IMR-90 (cell line): ENCODE measurements at regions of chr1 and their contacts with region 1.

Region 1: DNA sequence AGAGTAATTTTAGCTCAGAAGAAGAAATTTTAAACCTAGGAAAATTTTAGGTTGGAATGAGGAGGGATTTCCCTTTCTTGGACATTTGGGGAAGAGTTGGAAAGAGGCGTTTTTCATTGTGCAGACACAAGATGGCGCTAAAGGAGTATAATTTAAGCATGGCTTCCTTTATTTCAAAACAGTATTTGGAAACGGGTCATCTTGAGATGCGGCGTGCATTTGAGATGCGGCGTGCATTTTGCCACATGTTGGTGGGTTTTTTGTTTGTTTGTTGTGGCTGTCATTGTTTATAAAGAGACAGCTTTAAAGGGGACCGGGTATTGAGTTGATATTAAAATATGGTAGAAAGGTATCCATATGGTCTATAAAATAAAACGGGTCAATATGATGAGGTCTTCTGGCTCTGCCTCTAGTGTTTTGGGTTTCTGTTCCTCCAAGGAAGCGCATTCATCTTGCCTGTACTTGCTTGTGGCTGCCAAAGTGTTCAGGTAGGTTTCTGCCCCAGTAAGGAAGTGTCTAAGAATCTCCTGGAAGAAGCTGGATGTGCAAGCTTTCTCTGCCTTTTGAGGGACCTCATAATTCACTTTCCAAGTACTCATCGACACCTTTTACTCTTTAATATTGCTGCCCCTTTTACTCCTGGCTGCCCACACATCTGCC is 210.3 kb downstream of the SLC35F3 start:
- DNase-seq: peak; percentile 59
- ATAC-seq: peak; percentile 87
- H3K4me3 ChIP-seq: peak overlapping the region; percentile 25; the same call in 1 of the 2 replicates
- H3K27ac ChIP-seq: no peak overlapping the region
- H3K4me1 ChIP-seq: no peaks in the 10 kb centered on the region
- H3K27me3 ChIP-seq: no peaks in the 10 kb centered on the region
- CTCF ChIP-seq: peak; percentile 76
- POLR2A ChIP-seq: no peak
- RAD21 ChIP-seq: peak; percentile 69

Region 2: DNA sequence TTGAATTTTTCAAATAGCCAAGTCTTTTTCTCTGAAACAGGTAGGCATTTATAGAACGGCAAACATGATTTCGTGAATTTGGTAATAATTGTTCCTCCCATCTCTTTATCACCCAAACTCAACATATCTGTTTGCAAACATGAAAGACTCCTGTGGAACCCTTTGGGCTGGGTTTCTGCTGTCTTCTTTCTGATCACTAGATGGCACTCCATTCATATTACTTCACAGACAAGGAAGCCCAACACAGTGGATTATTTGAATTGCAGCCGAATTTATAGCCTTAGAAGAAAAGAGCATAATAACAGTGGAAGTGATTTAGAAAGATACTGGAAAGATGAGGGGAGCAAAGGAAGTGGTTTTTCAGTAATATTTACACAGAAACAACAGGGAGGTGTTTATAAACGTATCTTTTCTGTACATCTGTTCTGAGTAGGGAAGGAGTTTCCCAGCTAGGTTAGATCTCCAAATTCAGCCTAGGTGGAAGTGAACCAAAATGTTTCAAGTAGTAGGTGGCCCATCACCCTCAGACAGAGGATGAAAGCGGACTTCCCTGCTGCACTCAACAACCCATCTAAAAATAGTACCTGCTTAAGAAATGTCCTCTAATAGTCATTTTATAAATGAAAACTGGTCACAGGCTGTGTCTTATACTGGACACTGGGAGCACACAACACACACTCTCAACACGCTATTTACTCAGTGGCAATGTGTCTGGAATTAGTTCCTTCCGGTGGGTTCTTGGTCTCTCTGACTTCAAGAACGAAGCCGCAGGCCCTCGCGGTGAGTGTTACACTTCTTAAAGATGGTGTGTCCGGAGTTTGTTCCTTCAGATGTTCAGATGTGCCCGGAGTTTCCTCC is 719.7 kb before region 1 on chr1:
- CTCF ChIA-PET with region 1: no interaction called
- POLR2A ChIA-PET with region 1: interaction called, 3 read pairs
- dilution Hi-C with region 1: no loop called
- in situ Hi-C with region 1: no loop called
- intact Hi-C with region 1: loop called (anchors 2 kb)
- DNase-seq: peak; percentile 50
- ATAC-seq: peak; percentile 97
- H3K4me3 ChIP-seq: no peak overlapping the region
- H3K27ac ChIP-seq: no peak overlapping the region
- H3K4me1 ChIP-seq: no peaks in the 10 kb centered on the region
- H3K27me3 ChIP-seq: no peaks in the 10 kb centered on the region; the same call in 1 of the 2 replicates
- CTCF ChIP-seq: peak; percentile 73
- POLR2A ChIP-seq: no peak
- RAD21 ChIP-seq: peak; percentile 66

Region 3: DNA sequence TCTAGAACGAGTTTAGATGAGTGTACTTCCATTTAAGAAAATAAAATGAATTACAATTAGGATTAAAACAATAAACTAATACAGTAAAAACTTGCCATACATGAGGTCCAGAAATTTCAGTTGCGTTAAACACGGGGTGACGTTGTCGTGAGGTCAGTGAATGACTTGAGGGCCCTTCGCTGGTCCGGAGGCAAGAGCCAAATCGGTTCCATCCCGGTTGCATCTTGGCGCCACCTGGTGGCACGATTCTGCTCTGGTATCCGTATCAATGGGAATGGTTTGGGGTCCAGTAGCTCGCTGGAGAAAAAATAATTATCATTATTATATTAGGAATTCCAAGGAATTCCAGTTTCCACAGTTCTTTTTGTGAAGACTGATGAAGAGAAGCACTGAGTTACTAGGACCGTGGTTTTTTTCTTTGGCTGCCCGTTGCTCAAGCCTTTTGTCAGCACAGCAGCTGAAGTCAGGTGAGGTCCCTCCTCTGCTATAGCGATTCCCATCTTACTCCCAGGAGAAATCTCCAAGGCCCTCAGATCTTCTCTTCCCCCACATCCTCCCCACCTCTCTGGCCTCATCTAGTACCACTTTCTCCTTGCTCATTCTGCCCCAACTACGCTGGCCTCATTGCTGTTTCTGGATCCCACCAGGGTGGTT is 48.9 kb before region 1 on chr1:
- CTCF ChIA-PET with region 1: no interaction called
- POLR2A ChIA-PET with region 1: no interaction called
- dilution Hi-C with region 1: no loop called
- in situ Hi-C with region 1: no loop called
- intact Hi-C with region 1: no loop called
- DNase-seq: peak; percentile 47
- ATAC-seq: peak; percentile 82
- H3K4me3 ChIP-seq: no peak overlapping the region
- H3K27ac ChIP-seq: no peak overlapping the region
- H3K4me1 ChIP-seq: no peaks in the 10 kb centered on the region
- H3K27me3 ChIP-seq: no peaks in the 10 kb centered on the region
- CTCF ChIP-seq: peak; percentile 67
- POLR2A ChIP-seq: no peak
- RAD21 ChIP-seq: peak; percentile 58

Region 4: GRCh38 chr1:234309598-234310459 is 195.1 kb after region 1 on chr1:
- CTCF ChIA-PET with region 1: interaction called, 6 read pairs
- POLR2A ChIA-PET with region 1: no interaction called
- dilution Hi-C with region 1: no loop called
- in situ Hi-C with region 1: no loop called
- intact Hi-C with region 1: loop called (anchors 1 kb)
- DNase-seq: peak; percentile 46
- ATAC-seq: peak; percentile 89
- H3K4me3 ChIP-seq: peak overlapping the region; percentile 17; the same call in 1 of the 2 replicates
- H3K27ac ChIP-seq: no peak overlapping the region
- H3K4me1 ChIP-seq: peaks cover 3% of the 10 kb centered on the region; the same call in 1 of the 2 replicates
- H3K27me3 ChIP-seq: peaks cover 2% of the 10 kb centered on the region; the same call in 1 of the 2 replicates
- CTCF ChIP-seq: peak; percentile 71
- POLR2A ChIP-seq: no peak
- RAD21 ChIP-seq: peak; percentile 55

Region 5: DNA sequence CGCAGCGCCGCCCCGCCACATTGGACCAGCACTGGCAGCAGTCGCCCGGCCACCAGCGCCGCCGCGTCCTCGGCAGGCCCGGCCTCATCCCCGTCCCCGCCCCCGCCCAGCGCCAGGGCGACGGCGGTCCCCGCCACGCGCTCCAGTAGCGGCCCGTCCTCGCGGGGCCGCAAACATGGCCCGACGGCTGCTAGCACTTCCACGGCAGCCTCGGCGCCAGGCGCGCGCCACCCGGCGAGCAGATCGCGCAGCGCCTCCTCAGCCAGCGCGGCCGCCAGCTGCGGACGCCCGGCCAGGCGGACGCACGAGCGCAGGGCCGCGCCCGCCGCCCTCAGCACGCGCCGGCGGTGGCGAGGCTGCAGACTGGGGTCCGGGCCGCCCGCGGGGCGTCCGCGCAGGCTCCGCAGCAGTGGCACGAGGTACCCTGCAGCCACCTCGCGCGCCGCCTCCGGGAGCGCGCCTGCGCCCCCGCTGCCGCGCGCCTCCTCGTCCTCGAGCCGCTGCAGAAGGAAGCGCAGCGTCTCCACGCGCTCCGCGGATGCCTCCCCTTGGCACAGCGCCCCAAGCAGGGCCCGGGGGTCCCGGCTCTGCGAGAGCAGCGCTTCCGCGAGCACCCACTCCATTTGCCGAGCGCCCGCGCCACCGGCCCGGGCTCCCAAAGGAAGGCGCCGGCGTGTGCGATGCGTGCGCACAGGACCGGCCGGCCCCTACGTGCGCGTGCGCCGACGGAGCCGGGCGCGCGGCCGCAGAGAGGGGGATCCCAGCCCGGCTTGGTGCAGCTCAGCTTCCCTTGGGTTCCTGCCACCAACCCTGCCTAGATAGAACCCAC is 363.9 kb after region 1 on chr1 and contains the start of gene TARBP1:
- CTCF ChIA-PET with region 1: no interaction called
- POLR2A ChIA-PET with region 1: no interaction called
- dilution Hi-C with region 1: no loop called
- in situ Hi-C with region 1: no loop called
- intact Hi-C with region 1: loop called (anchors 2 kb)
- DNase-seq: peak; percentile 78
- ATAC-seq: peak; percentile 86
- H3K4me3 ChIP-seq: peak within 1 kb of the TSS; percentile 83
- H3K27ac ChIP-seq: peak within 1 kb of the TSS; percentile 62; the same call in 1 of the 2 replicates
- H3K4me1 ChIP-seq: peaks cover 8% of the 10 kb centered on the region
- H3K27me3 ChIP-seq: 0 out of 2 replicates have a peak, but pooled peaks cover 2% of the 10 kb centered on the region
- CTCF ChIP-seq: peak; percentile 36; the same call in 1 of the 2 replicates
- POLR2A ChIP-seq: 0 out of 2 replicates have a peak, but pooled peaks have one; percentile 26
- RAD21 ChIP-seq: peak; percentile 31
- total RNA-seq, gene TARBP1: 10.6 and 12.8 TPM in 2 replicates

Region 6: DNA sequence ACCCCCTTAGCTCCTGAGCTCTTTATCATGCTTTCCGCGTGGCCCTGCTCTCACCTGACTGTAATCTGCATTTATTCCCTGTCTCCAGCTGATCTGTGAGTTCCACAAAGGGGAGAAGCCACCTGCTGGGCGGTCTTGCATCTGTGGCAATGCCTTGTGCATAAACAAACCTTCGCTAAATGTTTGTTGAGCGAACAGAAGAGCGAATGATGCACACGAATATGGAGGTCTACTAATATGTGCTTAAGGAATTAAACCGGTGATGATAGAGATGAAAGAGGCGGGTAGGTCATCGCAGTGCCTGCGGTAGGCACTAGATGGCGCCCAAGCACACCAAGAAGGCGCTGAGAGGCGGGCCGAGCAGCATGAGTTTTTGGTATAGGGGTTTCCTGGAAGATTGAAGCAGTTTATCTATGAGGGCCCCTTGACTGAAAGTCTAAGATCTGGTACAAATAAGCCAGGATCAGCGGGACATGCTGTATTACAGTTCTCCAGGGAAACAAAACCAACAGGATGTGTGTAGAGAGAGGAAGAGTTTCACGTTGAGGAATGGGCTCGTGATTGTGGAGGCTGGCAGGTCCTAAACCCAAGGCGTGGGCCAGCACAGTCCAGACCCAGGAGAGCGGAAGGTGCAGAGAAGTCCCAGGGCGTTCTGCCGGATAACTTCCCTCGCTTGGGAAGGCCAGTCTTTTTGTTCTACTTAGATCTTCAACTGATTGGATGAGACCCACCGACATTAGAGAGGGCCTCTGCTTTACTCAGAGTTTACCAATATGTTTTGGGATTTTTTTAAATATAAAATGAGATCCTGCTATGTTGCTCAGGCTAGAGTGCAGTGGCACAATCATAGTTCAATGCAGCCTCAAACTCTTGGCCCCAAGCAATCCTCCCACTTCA is 979.2 kb after region 1 on chr1:
- CTCF ChIA-PET with region 1: no interaction called
- POLR2A ChIA-PET with region 1: no interaction called
- dilution Hi-C with region 1: no loop called
- in situ Hi-C with region 1: no loop called
- intact Hi-C with region 1: loop called (anchors 10 kb)
- DNase-seq: peak; percentile 55
- ATAC-seq: peak; percentile 91
- H3K4me3 ChIP-seq: no peak overlapping the region
- H3K27ac ChIP-seq: no peak overlapping the region
- H3K4me1 ChIP-seq: peaks cover 11% of the 10 kb centered on the region
- H3K27me3 ChIP-seq: no peaks in the 10 kb centered on the region
- CTCF ChIP-seq: peak; percentile 87
- POLR2A ChIP-seq: no peak
- RAD21 ChIP-seq: peak; percentile 72